ENCODE measurements at regions of chr17 and their contacts with region 1.

Region 1: GRCh38 chr17:59440784-59441441 is 109.5 kb downstream of the YPEL2 start:
- DNase-seq: peak; percentile 54 to 87 (median 80)
- ATAC-seq: peak; percentile 97
- H3K4me3 ChIP-seq: no peak overlapping the region
- H3K4me3 Mint-ChIP-seq: peak overlapping the region in 8 of 10 donors; percentile 9 to 72 (median 46)
- H3K27ac ChIP-seq: no peak overlapping the region
- H3K27ac Mint-ChIP-seq: peak overlapping the region in 7 of 9 donors; percentile 13 to 89 (median 55)
- H3K4me1 ChIP-seq: peaks cover 4 to 20% of the 10 kb centered on the region in 2 donors
- H3K4me1 Mint-ChIP-seq: peaks cover 0 to 50% (median 27%) of the 10 kb centered on the region in 7 donors
- H3K27me3 ChIP-seq: no peaks in the 10 kb centered on the region
- H3K27me3 Mint-ChIP-seq: peaks cover 0 to 7% (median 0%) of the 10 kb centered on the region in 5 donors

Region 2: GRCh38 chr17:59165902-59166342 is 275.0 kb before region 1 on chr17:
- CTCF ChIA-PET with region 1: no interaction called
- POLR2A ChIA-PET with region 1: no interaction called
- intact Hi-C with region 1: loop called in 1 of 2 experiments (anchors 5 kb)
- DNase-seq: peak in 4 of 9 donors; percentile 15 to 34 (median 24)
- ATAC-seq: peak; percentile 74
- H3K4me3 ChIP-seq: no peak overlapping the region
- H3K4me3 Mint-ChIP-seq: peak overlapping the region in 1 of 10 donors; percentile 67
- H3K27ac ChIP-seq: no peak overlapping the region
- H3K27ac Mint-ChIP-seq: peak overlapping the region in 1 of 9 donors; percentile 87
- H3K4me1 ChIP-seq: peaks cover 0 to 4% of the 10 kb centered on the region in 2 donors
- H3K4me1 Mint-ChIP-seq: peaks cover 0 to 20% (median 0%) of the 10 kb centered on the region in 7 donors
- H3K27me3 ChIP-seq: no peaks in the 10 kb centered on the region
- H3K27me3 Mint-ChIP-seq: no peaks in the 10 kb centered on the region

Region 3: GRCh38 chr17:59311130-59311920 is 129.6 kb before region 1 on chr17:
- CTCF ChIA-PET with region 1: interaction called, 191 read pairs
- POLR2A ChIA-PET with region 1: interaction called, 11 read pairs
- intact Hi-C with region 1: loop called (anchors 1 kb)
- DNase-seq: peak in 8 of 9 donors; percentile 38 to 74 (median 63)
- ATAC-seq: peak; percentile 98
- H3K4me3 ChIP-seq: no peak overlapping the region
- H3K4me3 Mint-ChIP-seq: no peak overlapping the region
- H3K27ac ChIP-seq: no peak overlapping the region
- H3K27ac Mint-ChIP-seq: peak overlapping the region in 2 of 9 donors; percentile 29 to 76
- H3K4me1 ChIP-seq: no peaks in the 10 kb centered on the region
- H3K4me1 Mint-ChIP-seq: peaks cover 0 to 7% (median 4%) of the 10 kb centered on the region in 7 donors
- H3K27me3 ChIP-seq: no peaks in the 10 kb centered on the region
- H3K27me3 Mint-ChIP-seq: no peaks in the 10 kb centered on the region

Region 4: GRCh38 chr17:59361916-59362810 is 78.8 kb before region 1 on chr17:
- CTCF ChIA-PET with region 1: interaction called, 6 read pairs
- POLR2A ChIA-PET with region 1: interaction called, 3 read pairs
- intact Hi-C with region 1: loop called (anchors 1 to 2 kb)
- DNase-seq: peak in 8 of 9 donors; percentile 44 to 74 (median 64)
- ATAC-seq: peak; percentile 74
- H3K4me3 ChIP-seq: peak overlapping the region; percentile 43
- H3K4me3 Mint-ChIP-seq: peak overlapping the region; percentile 75 to 90 (median 80)
- H3K27ac ChIP-seq: peak overlapping the region; percentile 68
- H3K27ac Mint-ChIP-seq: peak overlapping the region; percentile 89 to 98 (median 94)
- H3K4me1 ChIP-seq: peaks cover 28 to 83% of the 10 kb centered on the region in 2 donors
- H3K4me1 Mint-ChIP-seq: peaks cover 57 to 97% (median 89%) of the 10 kb centered on the region in 7 donors
- H3K27me3 ChIP-seq: no peaks in the 10 kb centered on the region
- H3K27me3 Mint-ChIP-seq: no peaks in the 10 kb centered on the region

Region 5: GRCh38 chr17:59466946-59467801 is 26.3 kb after region 1 on chr17:
- CTCF ChIA-PET with region 1: no interaction called
- POLR2A ChIA-PET with region 1: no interaction called
- intact Hi-C with region 1: no loop called
- DNase-seq: no peak
- ATAC-seq: no peak
- H3K4me3 ChIP-seq: no peak overlapping the region
- H3K4me3 Mint-ChIP-seq: no peak overlapping the region
- H3K27ac ChIP-seq: no peak overlapping the region
- H3K27ac Mint-ChIP-seq: no peak overlapping the region
- H3K4me1 ChIP-seq: no peaks in the 10 kb centered on the region
- H3K4me1 Mint-ChIP-seq: peaks cover 0 to 24% (median 0%) of the 10 kb centered on the region in 7 donors
- H3K27me3 ChIP-seq: no peaks in the 10 kb centered on the region
- H3K27me3 Mint-ChIP-seq: peaks cover 0 to 2% (median 0%) of the 10 kb centered on the region in 5 donors

Region 6: GRCh38 chr17:59521204-59522126 is 80.6 kb after region 1 on chr17:
- CTCF ChIA-PET with region 1: interaction called, 4 read pairs
- POLR2A ChIA-PET with region 1: no interaction called
- intact Hi-C with region 1: loop called in 1 of 2 experiments (anchors 1 kb)
- DNase-seq: peak; percentile 17 to 69 (median 38)
- ATAC-seq: peak; percentile 85
- H3K4me3 ChIP-seq: no peak overlapping the region
- H3K4me3 Mint-ChIP-seq: no peak overlapping the region
- H3K27ac ChIP-seq: no peak overlapping the region
- H3K27ac Mint-ChIP-seq: no peak overlapping the region
- H3K4me1 ChIP-seq: no peaks in the 10 kb centered on the region
- H3K4me1 Mint-ChIP-seq: peaks cover 0 to 6% (median 5%) of the 10 kb centered on the region in 7 donors
- H3K27me3 ChIP-seq: peaks cover 0 to 3% of the 10 kb centered on the region in 2 donors
- H3K27me3 Mint-ChIP-seq: peaks cover 4 to 22% (median 10%) of the 10 kb centered on the region in 5 donors